A549 (cell line): ENCODE measurements at regions of chr14 and their contacts with region 1.

Region 1: DNA sequence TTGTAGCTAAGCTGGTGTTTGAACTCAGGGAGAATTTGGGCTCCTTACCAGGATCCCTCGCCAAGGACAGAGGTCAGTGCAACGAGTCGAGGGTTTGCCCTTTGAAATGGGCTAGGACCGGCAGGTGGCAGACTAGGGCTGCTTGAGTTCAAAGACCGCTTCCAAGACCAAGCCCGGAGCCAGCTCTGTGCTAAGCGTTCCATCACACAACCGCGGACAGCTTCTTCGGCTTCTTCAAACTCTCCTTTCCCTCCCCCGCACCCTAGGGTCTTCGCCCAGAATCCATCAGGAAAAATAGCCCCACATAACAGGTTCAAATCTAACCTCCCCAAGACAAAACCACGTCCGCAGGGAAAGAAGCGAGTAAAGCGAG is 705 bp upstream of the FLVCR2 start:
- DNase-seq: peak; percentile 86 to 90
- ATAC-seq: peak; percentile 90 to 96
- H3K4me3 ChIP-seq: peak overlapping the region; percentile 53
- H3K27ac ChIP-seq: peak overlapping the region; percentile 75 to 79
- H3K4me1 ChIP-seq: peaks cover 8% of the 10 kb centered on the region
- CTCF ChIP-seq: peak; percentile 86
- EP300 ChIP-seq: no peak
- POLR2A ChIP-seq: no peak
- RAD21 ChIP-seq: peak; percentile 92 to 93

Region 2: DNA sequence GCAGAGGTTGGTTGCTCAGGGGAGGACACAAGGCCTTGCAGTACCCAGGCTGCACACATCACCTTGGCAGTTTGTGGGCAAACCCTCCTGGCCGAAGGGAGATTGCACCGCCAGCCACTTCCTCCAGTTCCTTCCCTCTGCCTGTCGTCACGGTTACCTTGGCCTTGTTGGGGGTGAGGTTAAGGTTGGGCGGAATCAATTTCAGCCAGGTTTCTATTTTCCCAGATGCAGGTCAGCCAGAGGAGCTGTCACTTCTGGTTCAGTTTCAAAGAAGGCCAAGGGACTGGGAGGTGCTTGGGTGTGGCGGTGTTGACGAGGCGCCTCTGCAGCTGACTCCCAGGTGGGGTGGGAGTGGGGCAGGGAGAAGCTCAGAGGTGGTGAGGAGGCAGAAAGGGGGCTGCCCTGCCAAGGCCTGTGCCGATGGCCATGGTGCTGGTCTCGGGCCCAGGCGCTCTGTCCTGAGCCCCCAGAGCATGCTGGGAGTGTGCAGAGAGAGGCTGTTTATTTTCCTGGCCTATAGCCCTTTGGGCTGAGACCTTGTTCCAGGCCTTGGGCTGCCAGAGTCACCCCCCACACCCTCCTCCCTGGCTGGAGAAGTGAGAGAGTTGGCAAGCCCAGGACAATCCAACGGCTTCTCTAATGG is 118.5 kb before region 1 on chr14:
- CTCF ChIA-PET with region 1: interaction called, 10 read pairs
- POLR2A ChIA-PET with region 1: no interaction called
- DNase-seq: peak in 1 of 2 experiments; percentile 19
- ATAC-seq: peak in 1 of 2 experiments; percentile 29; a peak in 3 of 6 replicates
- H3K4me3 ChIP-seq: no peak overlapping the region
- H3K27ac ChIP-seq: peak overlapping the region in 1 of 2 experiments; percentile 0; a peak in 1 of 6 replicates
- H3K4me1 ChIP-seq: peaks cover 27% of the 10 kb centered on the region
- CTCF ChIP-seq: no peak
- EP300 ChIP-seq: no peak
- POLR2A ChIP-seq: no peak
- RAD21 ChIP-seq: no peak

Region 3: GRCh38 chr14:75597149-75597548 is 19.4 kb after region 1 on chr14:
- CTCF ChIA-PET with region 1: interaction called, 10 read pairs
- POLR2A ChIA-PET with region 1: no interaction called
- DNase-seq: no peak
- ATAC-seq: no peak
- H3K4me3 ChIP-seq: no peak overlapping the region
- H3K27ac ChIP-seq: no peak overlapping the region
- H3K4me1 ChIP-seq: peaks cover 2% of the 10 kb centered on the region; the same call in 2 of the 3 replicates
- CTCF ChIP-seq: no peak
- EP300 ChIP-seq: no peak
- POLR2A ChIP-seq: no peak
- RAD21 ChIP-seq: no peak

Region 4: DNA sequence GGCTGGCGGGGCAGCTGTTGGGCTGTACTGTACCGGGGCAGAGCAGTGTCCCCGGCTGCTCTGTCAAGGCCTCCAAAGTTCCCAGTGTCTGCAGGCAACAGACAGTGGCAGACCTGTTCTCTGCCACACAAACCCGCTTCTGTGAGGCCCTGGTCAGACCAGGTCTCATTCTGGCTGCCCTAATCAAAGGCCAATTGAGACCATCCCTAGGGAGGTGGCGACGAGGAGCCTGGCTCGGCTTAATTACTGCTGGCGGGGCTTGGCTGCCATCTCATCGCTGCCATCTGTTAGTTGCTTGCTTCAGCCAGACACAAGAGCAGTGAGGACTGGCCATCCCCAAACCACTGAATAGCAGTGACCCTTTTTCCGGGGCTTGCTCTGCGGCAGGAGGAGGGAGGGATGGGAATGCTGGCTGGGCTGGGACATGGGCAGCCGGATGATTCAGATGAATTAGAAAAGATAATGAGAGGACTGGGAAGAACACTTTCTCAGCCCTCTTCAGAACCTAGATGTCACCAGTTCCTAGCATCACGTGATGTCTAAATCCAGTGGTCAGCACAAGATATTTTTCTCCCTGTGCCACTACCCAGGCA is 58.5 kb after region 1 on chr14:
- CTCF ChIA-PET with region 1: interaction called, 10 read pairs
- POLR2A ChIA-PET with region 1: no interaction called
- DNase-seq: no peak
- ATAC-seq: no peak
- H3K4me3 ChIP-seq: no peak overlapping the region
- H3K27ac ChIP-seq: no peak overlapping the region
- H3K4me1 ChIP-seq: no peaks in the 10 kb centered on the region
- CTCF ChIP-seq: no peak
- EP300 ChIP-seq: no peak
- POLR2A ChIP-seq: no peak
- RAD21 ChIP-seq: no peak

Region 5: DNA sequence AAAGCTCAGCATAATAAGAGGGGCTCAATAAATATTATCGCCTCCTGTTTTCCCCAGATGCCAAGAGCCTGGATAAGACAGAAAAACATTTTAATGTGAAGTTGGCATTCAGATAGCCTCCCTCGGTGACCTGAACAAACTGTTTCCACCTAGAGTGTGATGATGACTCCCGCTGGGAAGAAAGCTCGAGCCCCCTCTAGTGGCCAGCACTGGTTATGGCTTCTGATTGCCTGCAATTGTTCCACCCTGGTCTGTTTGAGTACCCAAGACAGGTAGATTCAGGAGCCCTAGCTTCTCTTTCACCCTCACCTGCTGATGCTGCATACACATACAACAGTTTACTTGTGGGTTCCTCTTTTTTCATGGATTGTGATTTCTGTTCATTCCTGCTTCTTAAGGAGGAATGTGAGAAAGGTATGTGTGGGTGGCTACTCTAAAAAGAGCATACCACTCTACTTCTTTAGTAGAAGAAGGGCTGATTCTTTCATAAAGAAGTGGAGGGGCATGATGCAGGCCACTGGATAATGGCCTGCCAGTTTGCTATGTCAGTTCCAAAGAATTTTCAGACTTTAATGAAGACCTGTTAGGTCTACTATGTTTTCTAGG is 76.5 kb after region 1 on chr14:
- CTCF ChIA-PET with region 1: interaction called, 546 read pairs
- POLR2A ChIA-PET with region 1: interaction called, 14 read pairs
- DNase-seq: peak; percentile 66 to 86
- ATAC-seq: peak; percentile 93 to 98
- H3K4me3 ChIP-seq: no peak overlapping the region
- H3K27ac ChIP-seq: peak overlapping the region; percentile 2 to 24; a peak in 1 of 6 replicates
- H3K4me1 ChIP-seq: peaks cover 16% of the 10 kb centered on the region; the same call in 2 of the 3 replicates
- CTCF ChIP-seq: peak; percentile 94
- EP300 ChIP-seq: no peak
- POLR2A ChIP-seq: no peak
- RAD21 ChIP-seq: peak; percentile 91 to 95

Region 6: GRCh38 chr14:75783184-75783583 is 205.5 kb after region 1 on chr14:
- CTCF ChIA-PET with region 1: no interaction called
- POLR2A ChIA-PET with region 1: interaction called, 11 read pairs
- DNase-seq: no peak
- ATAC-seq: no peak
- H3K4me3 ChIP-seq: no peak overlapping the region
- H3K27ac ChIP-seq: no peak overlapping the region
- H3K4me1 ChIP-seq: no peaks in the 10 kb centered on the region
- CTCF ChIP-seq: no peak
- EP300 ChIP-seq: no peak
- POLR2A ChIP-seq: no peak
- RAD21 ChIP-seq: no peak